ENCODE measurements at regions of chr15 and their contacts with region 1.

Region 1: DNA sequence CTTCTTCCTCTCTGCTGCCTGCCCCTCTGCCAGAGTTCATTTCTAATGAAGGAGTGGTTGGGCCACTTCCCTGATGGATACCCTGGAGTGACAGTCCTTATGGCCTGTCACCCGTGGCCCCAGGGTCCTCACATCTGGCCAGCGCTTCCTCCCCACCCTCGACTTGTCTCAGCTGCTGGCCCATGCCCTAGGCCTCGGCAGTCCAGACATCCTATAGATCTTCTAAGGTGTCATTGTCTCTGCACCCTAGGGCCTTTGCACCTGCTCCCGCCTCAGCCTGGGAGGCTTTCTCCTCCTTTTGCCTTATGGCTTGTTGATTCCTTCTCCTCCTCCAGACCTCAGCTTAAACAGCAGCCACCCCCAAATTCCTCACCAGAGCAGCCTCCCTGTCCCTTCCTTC is 181.0 kb downstream of the NSMCE3 start:
- DNase-seq: no peak
- ATAC-seq: no peak
- H3K4me3 ChIP-seq: no peak overlapping the region
- H3K27ac ChIP-seq: no peak overlapping the region
- H3K4me1 ChIP-seq: no peaks in the 10 kb centered on the region
- H3K27me3 ChIP-seq: no peaks in the 10 kb centered on the region; the same call in 1 of the 2 replicates
- CTCF ChIP-seq: no peak

Region 2: GRCh38 chr15:27730868-27731267 is 1357.8 kb before region 1 on chr15:
- CTCF ChIA-PET with region 1: no interaction called
- POLR2A ChIA-PET with region 1: no interaction called
- in situ Hi-C with region 1: no loop called
- intact Hi-C with region 1: no loop called
- DNase-seq: no peak
- ATAC-seq: no peak
- H3K4me3 ChIP-seq: no peak overlapping the region
- H3K27ac ChIP-seq: no peak overlapping the region
- H3K4me1 ChIP-seq: no peaks in the 10 kb centered on the region
- H3K27me3 ChIP-seq: no peaks in the 10 kb centered on the region
- CTCF ChIP-seq: no peak

Region 3: GRCh38 chr15:29078541-29078940 is 10.1 kb before region 1 on chr15:
- CTCF ChIA-PET with region 1: no interaction called
- POLR2A ChIA-PET with region 1: interaction called, 11 read pairs
- in situ Hi-C with region 1: no loop called
- intact Hi-C with region 1: no loop called
- DNase-seq: no peak
- ATAC-seq: no peak
- H3K4me3 ChIP-seq: no peak overlapping the region
- H3K27ac ChIP-seq: no peak overlapping the region
- H3K4me1 ChIP-seq: no peaks in the 10 kb centered on the region
- H3K27me3 ChIP-seq: no peaks in the 10 kb centered on the region
- CTCF ChIP-seq: no peak